B cell (primary cell): ENCODE measurements at regions of chr4 and their contacts with region 1.

Region 1: DNA sequence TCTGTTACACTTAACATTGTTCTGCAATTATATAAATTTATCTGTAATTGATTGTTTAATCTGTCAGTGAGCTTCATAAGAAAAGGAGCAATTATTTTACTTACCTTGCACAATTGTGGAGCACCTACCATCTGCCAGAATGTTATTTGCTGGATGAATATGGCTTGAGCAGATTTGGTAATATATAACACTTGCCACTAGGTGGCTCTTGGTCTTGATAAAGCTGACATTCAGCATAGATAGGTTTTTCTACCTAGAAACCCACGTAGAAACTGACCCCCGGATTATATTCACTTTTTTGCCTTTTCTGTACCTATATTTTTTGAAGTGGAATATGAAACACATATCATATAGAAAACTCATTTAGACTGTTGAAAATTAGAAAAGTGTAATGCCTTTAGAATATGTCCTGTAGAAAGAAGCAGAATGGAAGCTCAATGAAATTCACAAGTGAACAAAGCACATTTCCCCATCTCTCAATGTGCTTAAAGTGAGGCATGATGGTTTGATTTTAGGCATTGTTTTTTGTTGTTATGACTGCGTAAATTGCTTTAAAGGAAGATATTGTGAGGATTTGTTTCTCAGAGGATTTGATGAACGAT is 9.5 kb downstream of the RBPJ start:
- DNase-seq: peak; percentile 69
- ATAC-seq: peak; percentile 79
- H3K4me3 ChIP-seq: no peak overlapping the region
- H3K4me3 Mint-ChIP-seq: no peak overlapping the region
- H3K27ac ChIP-seq: no peak overlapping the region
- H3K27ac Mint-ChIP-seq: no peak overlapping the region
- H3K4me1 ChIP-seq: no peaks in the 10 kb centered on the region
- H3K4me1 Mint-ChIP-seq: peaks cover 26% of the 10 kb centered on the region
- H3K27me3 ChIP-seq: no peaks in the 10 kb centered on the region
- H3K27me3 Mint-ChIP-seq: no peaks in the 10 kb centered on the region
- CTCF ChIP-seq: peak; percentile 90

Region 2: DNA sequence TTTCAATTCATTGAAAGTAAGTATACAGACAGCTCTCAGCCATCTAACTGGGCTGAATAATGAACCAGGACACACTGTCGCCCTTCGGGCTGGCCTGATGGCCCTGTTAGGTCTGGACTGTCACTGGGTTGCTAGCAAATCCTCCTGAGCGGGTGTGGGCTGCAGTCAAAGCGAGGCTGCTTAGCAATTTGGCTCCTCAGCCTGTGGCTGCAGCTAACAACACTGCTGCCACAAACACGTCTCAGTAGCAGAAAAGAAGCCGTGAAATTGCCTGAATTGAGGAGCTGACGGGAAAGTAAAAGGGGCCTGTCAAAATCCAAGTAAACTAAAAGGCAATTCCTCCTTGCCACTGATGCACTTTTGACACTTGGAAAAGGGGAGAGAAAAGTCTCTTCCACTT is 343.5 kb before region 1 on chr4:
- CTCF ChIA-PET with region 1: interaction called, 18 read pairs
- POLR2A ChIA-PET with region 1: no interaction called
- intact Hi-C with region 1: loop called (anchors 2 kb)
- DNase-seq: no peak
- ATAC-seq: no peak
- H3K4me3 ChIP-seq: no peak overlapping the region
- H3K4me3 Mint-ChIP-seq: no peak overlapping the region
- H3K27ac ChIP-seq: no peak overlapping the region
- H3K27ac Mint-ChIP-seq: no peak overlapping the region
- H3K4me1 ChIP-seq: peaks cover 5 to 21% of the 10 kb centered on the region in 2 donors
- H3K4me1 Mint-ChIP-seq: peaks cover 20% of the 10 kb centered on the region
- H3K27me3 ChIP-seq: peaks cover 0 to 6% (median 0%) of the 10 kb centered on the region in 4 experiments
- H3K27me3 Mint-ChIP-seq: peaks cover 5% of the 10 kb centered on the region
- CTCF ChIP-seq: no peak

Region 3: DNA sequence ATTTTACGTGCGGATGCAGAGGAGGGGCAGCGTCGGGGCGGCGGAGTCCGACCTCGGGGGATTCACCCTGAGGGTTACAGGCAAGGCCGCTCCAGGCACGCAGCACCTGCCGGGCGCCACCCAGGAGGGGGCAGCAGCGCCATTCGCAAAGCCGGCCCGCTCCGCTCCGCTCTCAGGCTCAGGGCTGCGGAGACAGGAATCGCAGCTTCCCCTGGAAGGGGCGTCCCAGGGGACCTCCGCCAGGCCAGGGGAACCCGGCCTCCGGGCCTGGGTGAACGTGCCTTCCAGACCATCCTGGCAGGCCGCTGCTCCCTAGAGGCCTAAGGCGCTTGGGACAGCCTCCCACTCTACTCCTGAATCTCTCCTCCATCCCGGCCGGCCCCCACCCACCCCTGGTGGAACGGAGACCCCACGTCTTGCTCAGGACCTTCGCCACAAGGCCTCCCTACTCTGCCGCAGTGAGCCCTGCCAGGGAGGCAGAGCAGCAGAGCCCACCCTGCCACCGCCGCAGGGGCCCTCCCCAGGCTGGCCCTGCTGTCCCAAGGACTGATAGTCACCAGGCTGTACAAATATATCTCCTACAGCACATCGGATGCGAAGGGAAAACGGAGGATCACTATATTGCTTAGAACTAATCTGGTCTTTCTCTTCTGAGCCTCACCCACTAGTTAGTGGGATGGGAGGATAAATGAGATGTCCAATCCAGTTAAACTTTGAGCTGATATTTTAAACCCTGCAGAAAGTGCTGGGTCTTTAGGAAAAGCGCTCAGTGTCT is 301.3 kb before region 1 on chr4:
- CTCF ChIA-PET with region 1: interaction called, 13 read pairs
- POLR2A ChIA-PET with region 1: no interaction called
- intact Hi-C with region 1: loop called (anchors 1 kb)
- DNase-seq: peak; percentile 64
- ATAC-seq: peak; percentile 87
- H3K4me3 ChIP-seq: no peak overlapping the region
- H3K4me3 Mint-ChIP-seq: no peak overlapping the region
- H3K27ac ChIP-seq: no peak overlapping the region
- H3K27ac Mint-ChIP-seq: no peak overlapping the region
- H3K4me1 ChIP-seq: peaks cover 5 to 8% of the 10 kb centered on the region in 2 donors
- H3K4me1 Mint-ChIP-seq: peaks cover 6% of the 10 kb centered on the region
- H3K27me3 ChIP-seq: peaks cover 0 to 17% (median 3%) of the 10 kb centered on the region in 4 experiments
- H3K27me3 Mint-ChIP-seq: peaks cover 18% of the 10 kb centered on the region
- CTCF ChIP-seq: peak; percentile 69

Region 4: GRCh38 chr4:26311633-26312032 is 18.7 kb before region 1 on chr4:
- CTCF ChIA-PET with region 1: interaction called, 11 read pairs
- POLR2A ChIA-PET with region 1: no interaction called
- intact Hi-C with region 1: no loop called
- DNase-seq: no peak
- ATAC-seq: no peak
- H3K4me3 ChIP-seq: no peak overlapping the region
- H3K4me3 Mint-ChIP-seq: no peak overlapping the region
- H3K27ac ChIP-seq: no peak overlapping the region
- H3K27ac Mint-ChIP-seq: no peak overlapping the region
- H3K4me1 ChIP-seq: peaks cover 8% of the 10 kb centered on the region in 2 donors
- H3K4me1 Mint-ChIP-seq: peaks cover 14% of the 10 kb centered on the region
- H3K27me3 ChIP-seq: no peaks in the 10 kb centered on the region
- H3K27me3 Mint-ChIP-seq: no peaks in the 10 kb centered on the region
- CTCF ChIP-seq: no peak

Region 5: GRCh38 chr4:26319467-26319948 is 10.8 kb before region 1 on chr4:
- CTCF ChIA-PET with region 1: interaction called, 23 read pairs
- POLR2A ChIA-PET with region 1: no interaction called
- intact Hi-C with region 1: no loop called
- DNase-seq: peak; percentile 97
- ATAC-seq: peak; percentile 73
- H3K4me3 ChIP-seq: peak overlapping the region; percentile 75 to 91 (median 87)
- H3K4me3 Mint-ChIP-seq: peak overlapping the region; percentile 99
- H3K27ac ChIP-seq: peak overlapping the region; percentile 78 to 89
- H3K27ac Mint-ChIP-seq: peak overlapping the region; percentile 99
- H3K4me1 ChIP-seq: peaks cover 13 to 22% of the 10 kb centered on the region in 2 donors
- H3K4me1 Mint-ChIP-seq: peaks cover 27% of the 10 kb centered on the region
- H3K27me3 ChIP-seq: no peaks in the 10 kb centered on the region
- H3K27me3 Mint-ChIP-seq: no peaks in the 10 kb centered on the region
- CTCF ChIP-seq: no peak

Region 6: GRCh38 chr4:26342328-26343037 is 12.2 kb after region 1 on chr4:
- CTCF ChIA-PET with region 1: interaction called, 13 read pairs
- POLR2A ChIA-PET with region 1: no interaction called
- intact Hi-C with region 1: no loop called
- DNase-seq: no peak
- ATAC-seq: no peak
- H3K4me3 ChIP-seq: no peak overlapping the region
- H3K4me3 Mint-ChIP-seq: no peak overlapping the region
- H3K27ac ChIP-seq: no peak overlapping the region
- H3K27ac Mint-ChIP-seq: no peak overlapping the region
- H3K4me1 ChIP-seq: no peaks in the 10 kb centered on the region
- H3K4me1 Mint-ChIP-seq: peaks cover 49% of the 10 kb centered on the region
- H3K27me3 ChIP-seq: no peaks in the 10 kb centered on the region
- H3K27me3 Mint-ChIP-seq: no peaks in the 10 kb centered on the region
- CTCF ChIP-seq: no peak

Region 7: DNA sequence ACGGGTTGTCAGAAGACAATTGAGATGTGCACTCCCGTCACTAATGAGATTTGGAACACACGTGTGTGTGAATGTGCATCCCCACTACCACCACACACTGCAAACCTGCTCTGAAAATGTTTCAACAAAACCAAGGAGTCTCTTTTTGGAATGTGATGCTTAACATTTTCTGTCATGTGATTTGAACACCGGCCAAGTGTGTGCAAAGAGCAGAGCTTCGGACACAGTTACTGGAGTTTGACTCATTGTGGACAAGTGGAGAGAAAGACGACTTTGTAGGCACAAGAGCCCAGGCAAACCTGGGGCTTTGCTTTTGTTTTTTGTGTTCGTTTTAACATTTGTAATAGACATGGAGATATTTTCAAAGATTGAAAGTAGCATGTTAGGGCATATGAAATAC is 110.8 kb after region 1 on chr4:
- CTCF ChIA-PET with region 1: no interaction called
- POLR2A ChIA-PET with region 1: no interaction called
- intact Hi-C with region 1: no loop called
- DNase-seq: no peak
- ATAC-seq: no peak
- H3K4me3 ChIP-seq: no peak overlapping the region
- H3K4me3 Mint-ChIP-seq: no peak overlapping the region
- H3K27ac ChIP-seq: no peak overlapping the region
- H3K27ac Mint-ChIP-seq: no peak overlapping the region
- H3K4me1 ChIP-seq: no peaks in the 10 kb centered on the region
- H3K4me1 Mint-ChIP-seq: no peaks in the 10 kb centered on the region
- H3K27me3 ChIP-seq: no peaks in the 10 kb centered on the region
- H3K27me3 Mint-ChIP-seq: peaks cover 4% of the 10 kb centered on the region
- CTCF ChIP-seq: no peak